ENCODE measurements at regions of chr7 and their contacts with region 1.

Region 1: GRCh38 chr7:5139998-5140397 is 50.0 kb upstream of the WIPI2 start:
- DNase-seq: peak; percentile 8
- ATAC-seq: no peak
- H3K4me3 ChIP-seq: no peak overlapping the region
- H3K27ac ChIP-seq: no peak overlapping the region
- H3K4me1 ChIP-seq: 0 out of 2 replicates have a peak, but pooled peaks cover 3% of the 10 kb centered on the region
- H3K27me3 ChIP-seq: no peaks in the 10 kb centered on the region
- CTCF ChIP-seq: peak; percentile 48 to 56 (median 50); a peak in 5 of 6 replicates
- EP300 ChIP-seq: no peak
- POLR2A ChIP-seq: no peak
- RAD21 ChIP-seq: peak; percentile 66

Region 2: DNA sequence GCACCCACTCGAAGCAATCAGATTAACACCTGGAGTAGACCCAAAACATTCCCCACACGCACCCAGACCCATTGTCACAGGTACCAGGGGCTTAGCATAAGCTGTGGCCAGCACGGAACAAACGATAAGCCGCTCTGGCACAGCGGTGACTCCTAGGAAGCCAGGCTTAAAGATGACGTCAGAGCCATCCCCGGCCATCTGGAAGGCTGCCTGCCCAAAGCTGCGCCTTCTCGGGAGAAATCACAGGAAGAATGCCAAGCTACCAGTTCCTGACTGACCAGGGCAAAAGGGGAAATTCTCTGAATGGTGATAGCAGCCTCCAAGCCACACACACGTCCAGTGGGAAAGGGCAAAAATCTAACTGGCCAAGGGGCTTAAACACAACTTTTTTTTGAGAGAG is 37.1 kb after region 1 on chr7:
- CTCF ChIA-PET with region 1: interaction called, 49 read pairs
- POLR2A ChIA-PET with region 1: interaction called, 4 read pairs
- RAD21 ChIA-PET with region 1: interaction called, 8 read pairs
- SMC1A ChIA-PET with region 1: interaction called, 19 read pairs
- in situ Hi-C with region 1: no loop called
- intact Hi-C with region 1: loop called (anchors 1 kb)
- DNase-seq: no peak
- ATAC-seq: no peak
- H3K4me3 ChIP-seq: no peak overlapping the region
- H3K27ac ChIP-seq: no peak overlapping the region
- H3K4me1 ChIP-seq: no peaks in the 10 kb centered on the region
- H3K27me3 ChIP-seq: no peaks in the 10 kb centered on the region
- CTCF ChIP-seq: no peak
- EP300 ChIP-seq: no peak
- POLR2A ChIP-seq: no peak
- RAD21 ChIP-seq: no peak

Region 3: DNA sequence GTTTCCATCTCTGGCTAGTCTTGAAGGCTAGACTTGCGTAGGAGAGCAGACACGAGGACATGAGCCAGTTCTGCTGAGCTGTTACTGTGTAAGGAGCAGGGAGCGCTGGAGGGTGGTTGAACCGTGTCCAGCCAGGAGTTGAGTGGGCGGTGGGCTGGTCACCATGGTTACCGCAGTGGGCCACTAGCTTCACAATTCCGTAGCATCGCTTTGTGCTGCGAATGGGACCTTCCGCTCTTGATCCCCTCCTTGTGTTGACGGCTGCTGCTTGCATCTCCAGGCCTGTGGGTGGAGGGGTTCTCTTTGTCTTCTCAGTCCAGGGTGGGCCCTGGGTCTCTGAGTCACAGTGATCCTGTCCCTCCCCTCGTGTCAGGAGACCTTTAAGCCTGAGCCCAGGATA is 691.2 kb after region 1 on chr7:
- CTCF ChIA-PET with region 1: no interaction called
- POLR2A ChIA-PET with region 1: no interaction called
- RAD21 ChIA-PET with region 1: no interaction called
- SMC1A ChIA-PET with region 1: no interaction called
- in situ Hi-C with region 1: no loop called
- intact Hi-C with region 1: loop called (anchors 5 kb)
- DNase-seq: no peak
- ATAC-seq: no peak
- H3K4me3 ChIP-seq: no peak overlapping the region
- H3K27ac ChIP-seq: no peak overlapping the region
- H3K4me1 ChIP-seq: no peaks in the 10 kb centered on the region
- H3K27me3 ChIP-seq: no peaks in the 10 kb centered on the region
- CTCF ChIP-seq: no peak
- EP300 ChIP-seq: no peak
- POLR2A ChIP-seq: no peak
- RAD21 ChIP-seq: no peak